T-cell (primary cell): ENCODE measurements at regions of chr18 and their contacts with region 1.

Region 1: GRCh38 chr18:46073474-46074331 is 1.6 kb upstream of the PSTPIP2 start:
- DNase-seq: peak in 26 of 35 experiments; percentile 9 to 83 (median 41)
- ATAC-seq: peak; percentile 36 to 66 (median 51)
- H3K4me3 ChIP-seq: no peak overlapping the region
- H3K4me3 Mint-ChIP-seq: peak overlapping the region in 2 of 3 donors; percentile 83 to 84
- H3K27ac ChIP-seq: no peak overlapping the region
- H3K27ac Mint-ChIP-seq: peak overlapping the region in 1 of 2 donors; percentile 53
- H3K4me1 ChIP-seq: peaks cover 5 to 41% of the 10 kb centered on the region in 2 experiments
- H3K4me1 Mint-ChIP-seq: peaks cover 37 to 45% (median 42%) of the 10 kb centered on the region in 3 donors
- H3K27me3 ChIP-seq: peaks cover 0 to 12% of the 10 kb centered on the region in 2 experiments
- H3K27me3 Mint-ChIP-seq: no peaks in the 10 kb centered on the region

Region 2: DNA sequence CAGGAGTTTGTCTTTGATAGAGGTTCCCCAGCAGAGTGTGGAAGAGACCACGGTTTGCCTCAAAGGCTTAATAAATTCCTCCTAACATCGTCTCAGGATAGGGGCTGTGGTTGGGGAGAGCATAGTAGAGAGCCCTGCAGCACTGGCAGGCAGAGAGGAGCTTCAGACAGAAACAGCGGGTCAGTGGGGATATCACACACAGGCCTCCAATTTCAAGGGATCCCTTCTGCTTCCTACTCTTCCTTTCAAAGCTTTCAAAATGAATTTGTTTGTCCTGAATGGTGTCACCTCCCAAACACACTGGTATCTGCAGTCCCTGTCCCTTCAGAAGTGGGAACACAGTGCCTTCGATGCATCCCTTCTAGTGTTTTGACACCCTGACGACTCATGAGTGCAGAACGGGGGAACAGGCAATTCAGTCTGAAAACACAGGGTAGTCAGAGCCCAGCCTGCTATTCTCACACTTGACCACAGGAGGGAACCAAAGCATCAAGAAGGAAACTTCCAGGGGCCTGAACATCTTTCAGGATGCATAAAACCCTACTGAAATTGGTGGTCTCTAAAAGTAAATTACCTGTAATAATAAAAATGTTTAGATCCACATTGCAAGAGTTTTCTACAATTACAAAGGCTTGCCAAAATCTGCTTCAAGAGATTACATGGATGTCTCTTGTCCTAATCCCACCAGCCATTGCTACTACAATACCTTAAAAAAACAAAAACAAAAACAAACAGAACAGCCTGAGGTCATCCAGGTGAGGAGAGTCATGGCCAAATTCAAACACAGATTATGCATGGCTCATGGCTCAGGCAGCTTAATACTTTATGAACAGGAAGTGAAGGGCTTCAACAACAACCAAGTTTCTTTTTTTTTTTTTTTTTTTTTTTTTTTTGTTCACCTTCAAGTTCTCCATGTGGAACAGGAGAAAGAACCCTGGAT is 408.6 kb before region 1 on chr18:
- CTCF ChIA-PET with region 1: interaction called, 16 to 32 read pairs
- POLR2A ChIA-PET with region 1: interaction called in 1 of 2 experiments, 8 read pairs
- DNase-seq: peak; percentile 21 to 85 (median 56)
- ATAC-seq: peak; percentile 71 to 74 (median 72)
- H3K4me3 ChIP-seq: no peak overlapping the region
- H3K4me3 Mint-ChIP-seq: peak overlapping the region; percentile 11 to 67 (median 32)
- H3K27ac ChIP-seq: peak overlapping the region; percentile 75
- H3K27ac Mint-ChIP-seq: peak overlapping the region; percentile 72 to 93
- H3K4me1 ChIP-seq: peaks cover 40 to 48% of the 10 kb centered on the region in 2 experiments
- H3K4me1 Mint-ChIP-seq: peaks cover 54 to 56% (median 54%) of the 10 kb centered on the region in 3 donors
- H3K27me3 ChIP-seq: no peaks in the 10 kb centered on the region
- H3K27me3 Mint-ChIP-seq: no peaks in the 10 kb centered on the region

Region 3: DNA sequence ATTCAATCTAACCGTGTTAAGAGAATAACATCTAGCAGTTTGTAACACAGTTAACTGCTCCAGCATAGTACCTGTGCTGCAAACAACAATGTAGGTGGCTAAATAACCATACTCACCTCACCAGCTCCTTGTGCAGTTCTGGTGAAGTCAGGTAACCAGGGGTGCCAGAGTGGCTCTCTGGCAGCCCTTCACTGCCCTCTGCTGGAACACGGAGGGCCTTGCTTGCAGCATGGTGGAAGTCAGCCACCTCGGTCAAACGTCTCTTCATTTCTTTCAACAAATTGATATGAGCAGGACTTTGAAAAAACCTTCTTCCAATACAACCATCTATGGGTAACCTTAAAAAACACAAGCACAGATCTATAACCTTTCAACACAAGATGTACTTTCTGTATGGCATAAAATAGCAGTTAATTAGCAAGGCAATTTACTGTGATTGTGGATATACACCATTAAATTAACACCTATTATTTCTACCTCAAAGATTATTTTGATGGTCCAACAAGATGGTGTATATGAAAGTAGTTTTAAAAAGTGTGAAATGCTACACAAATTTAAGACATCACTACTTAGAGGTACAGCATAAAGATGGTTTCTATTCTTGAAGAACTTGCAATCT is 163.2 kb before region 1 on chr18:
- CTCF ChIA-PET with region 1: interaction called, 4 to 11 read pairs
- POLR2A ChIA-PET with region 1: no interaction called
- DNase-seq: peak; percentile 22 to 72 (median 54)
- ATAC-seq: peak; percentile 58 to 82 (median 77)
- H3K4me3 ChIP-seq: no peak overlapping the region
- H3K4me3 Mint-ChIP-seq: no peak overlapping the region
- H3K27ac ChIP-seq: no peak overlapping the region
- H3K27ac Mint-ChIP-seq: no peak overlapping the region
- H3K4me1 ChIP-seq: no peaks in the 10 kb centered on the region
- H3K4me1 Mint-ChIP-seq: peaks cover 0 to 2% (median 0%) of the 10 kb centered on the region in 3 donors
- H3K27me3 ChIP-seq: no peaks in the 10 kb centered on the region
- H3K27me3 Mint-ChIP-seq: no peaks in the 10 kb centered on the region

Region 4: GRCh38 chr18:45967007-45967706 is 106.5 kb before region 1 on chr18 and contains the start of gene EPG5:
- CTCF ChIA-PET with region 1: interaction called in 1 of 2 experiments, 11 read pairs
- POLR2A ChIA-PET with region 1: no interaction called
- DNase-seq: peak; percentile 73 to 93 (median 85)
- ATAC-seq: peak; percentile 92 to 98 (median 96)
- H3K4me3 ChIP-seq: peak within 1 kb of the TSS; percentile 78 to 89
- H3K4me3 Mint-ChIP-seq: peak within 1 kb of the TSS; percentile 87 to 99 (median 98)
- H3K27ac ChIP-seq: peak within 1 kb of the TSS; percentile 59
- H3K27ac Mint-ChIP-seq: peak within 1 kb of the TSS; percentile 92 to 98
- H3K4me1 ChIP-seq: peaks cover 14 to 28% of the 10 kb centered on the region in 2 experiments
- H3K4me1 Mint-ChIP-seq: peaks cover 44 to 56% (median 46%) of the 10 kb centered on the region in 3 donors
- H3K27me3 ChIP-seq: no peaks in the 10 kb centered on the region
- H3K27me3 Mint-ChIP-seq: no peaks in the 10 kb centered on the region
- total RNA-seq, gene EPG5: 39.2 to 54.4 (median 42.6) TPM

Region 5: GRCh38 chr18:45997700-45998151 is 76.0 kb before region 1 on chr18:
- CTCF ChIA-PET with region 1: interaction called in 1 of 2 experiments, 10 read pairs
- POLR2A ChIA-PET with region 1: no interaction called
- DNase-seq: peak in 20 of 35 experiments; percentile 1 to 43 (median 6)
- ATAC-seq: peak; percentile 68 to 74 (median 70)
- H3K4me3 ChIP-seq: peak overlapping the region in 1 of 2 donors; percentile 13
- H3K4me3 Mint-ChIP-seq: peak overlapping the region; percentile 61 to 73 (median 64)
- H3K27ac ChIP-seq: peak overlapping the region; percentile 79
- H3K27ac Mint-ChIP-seq: peak overlapping the region; percentile 94 to 97
- H3K4me1 ChIP-seq: peaks cover 20 to 30% of the 10 kb centered on the region in 2 experiments
- H3K4me1 Mint-ChIP-seq: peaks cover 42 to 64% (median 48%) of the 10 kb centered on the region in 3 donors
- H3K27me3 ChIP-seq: no peaks in the 10 kb centered on the region
- H3K27me3 Mint-ChIP-seq: no peaks in the 10 kb centered on the region

Region 6: GRCh38 chr18:46649071-46649862 is 575.6 kb after region 1 on chr18:
- CTCF ChIA-PET with region 1: no interaction called
- POLR2A ChIA-PET with region 1: no interaction called
- DNase-seq: no peak
- ATAC-seq: no peak
- H3K4me3 ChIP-seq: no peak overlapping the region
- H3K4me3 Mint-ChIP-seq: no peak overlapping the region
- H3K27ac ChIP-seq: no peak overlapping the region
- H3K27ac Mint-ChIP-seq: no peak overlapping the region
- H3K4me1 ChIP-seq: no peaks in the 10 kb centered on the region
- H3K4me1 Mint-ChIP-seq: no peaks in the 10 kb centered on the region
- H3K27me3 ChIP-seq: peaks cover 0 to 13% of the 10 kb centered on the region in 2 experiments
- H3K27me3 Mint-ChIP-seq: peaks cover 3 to 6% of the 10 kb centered on the region in 2 donors